ENCODE measurements at regions of chr10 and their contacts with region 1.

Region 1: GRCh38 chr10:69716711-69717560 is 84.8 kb upstream of the COL13A1 start:
- DNase-seq: no peak
- H3K4me3 ChIP-seq: no peak overlapping the region
- H3K27me3 ChIP-seq: no peaks in the 10 kb centered on the region
- CTCF ChIP-seq: peak; percentile 86

Region 2: GRCh38 chr10:69515699-69516259 is 201.2 kb before region 1 on chr10:
- CTCF ChIA-PET with region 1: interaction called, 23 read pairs
- POLR2A ChIA-PET with region 1: no interaction called
- DNase-seq: no peak
- H3K4me3 ChIP-seq: no peak overlapping the region
- H3K27me3 ChIP-seq: peaks cover 12% of the 10 kb centered on the region
- CTCF ChIP-seq: peak; percentile 92

Region 3: GRCh38 chr10:69573056-69573806 is 143.7 kb before region 1 on chr10 and contains the start of gene NEUROG3:
- CTCF ChIA-PET with region 1: no interaction called
- POLR2A ChIA-PET with region 1: no interaction called
- DNase-seq: no peak
- H3K4me3 ChIP-seq: no peak within 1 kb of the TSS
- H3K27me3 ChIP-seq: peaks cover 73% of the 10 kb centered on the region
- CTCF ChIP-seq: no peak
- polyA plus RNA-seq, gene NEUROG3: not detected in 2 replicates

Region 4: GRCh38 chr10:69639291-69640195 is 77.4 kb before region 1 on chr10:
- CTCF ChIA-PET with region 1: interaction called, 245 read pairs
- POLR2A ChIA-PET with region 1: no interaction called
- DNase-seq: no peak
- H3K4me3 ChIP-seq: no peak overlapping the region
- H3K27me3 ChIP-seq: peaks cover 2% of the 10 kb centered on the region
- CTCF ChIP-seq: peak; percentile 83

Region 5: GRCh38 chr10:69655124-69655867 is 61.6 kb before region 1 on chr10:
- CTCF ChIA-PET with region 1: interaction called, 15 read pairs
- POLR2A ChIA-PET with region 1: no interaction called
- DNase-seq: no peak
- H3K4me3 ChIP-seq: no peak overlapping the region
- H3K27me3 ChIP-seq: peaks cover 19% of the 10 kb centered on the region
- CTCF ChIP-seq: no peak

Region 6: DNA sequence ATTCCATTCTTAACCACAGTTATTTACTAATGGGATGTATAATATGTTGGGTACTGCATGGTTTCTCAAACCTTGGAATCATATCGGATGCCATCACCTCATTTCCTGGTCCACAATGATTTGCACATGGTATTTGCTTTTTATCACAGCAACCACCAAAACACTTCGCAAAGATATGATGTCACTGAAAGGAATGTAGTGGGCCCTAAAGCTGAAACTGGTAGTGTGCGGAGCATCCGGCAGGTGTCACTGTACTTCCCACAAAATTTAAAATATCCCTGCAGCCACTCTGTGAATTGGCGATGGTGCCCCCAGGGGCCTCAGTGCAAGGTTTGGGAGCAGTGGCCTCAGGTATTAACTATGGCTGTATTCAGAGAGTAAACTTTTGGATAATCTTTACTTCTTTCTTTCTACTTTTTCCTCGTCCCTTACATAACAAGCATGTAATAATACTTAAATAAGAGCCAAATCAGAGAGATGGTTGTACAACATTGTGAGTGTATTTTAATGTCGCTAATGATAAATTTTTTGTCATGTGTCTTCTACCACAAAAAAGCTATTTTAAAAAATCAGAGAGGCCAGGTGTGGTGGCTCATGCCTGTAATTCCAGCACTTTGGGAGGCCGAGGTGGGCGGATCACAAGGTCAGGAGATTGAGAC is 20.7 kb before region 1 on chr10:
- CTCF ChIA-PET with region 1: interaction called, 59 read pairs
- POLR2A ChIA-PET with region 1: no interaction called
- DNase-seq: peak; percentile 93
- H3K4me3 ChIP-seq: no peak overlapping the region
- H3K27me3 ChIP-seq: peaks cover 15% of the 10 kb centered on the region
- CTCF ChIP-seq: peak; percentile 76

Region 7: GRCh38 chr10:69728335-69728870 is 11.5 kb after region 1 on chr10:
- CTCF ChIA-PET with region 1: interaction called, 57 read pairs
- POLR2A ChIA-PET with region 1: no interaction called
- DNase-seq: no peak
- H3K4me3 ChIP-seq: no peak overlapping the region
- H3K27me3 ChIP-seq: peaks cover 7% of the 10 kb centered on the region
- CTCF ChIP-seq: no peak

Measured in BJ (cell line).